CD4-positive, alpha-beta memory T cell (primary cell): ENCODE measurements at regions of chr6 and their contacts with region 1.

Region 1: GRCh38 chr6:129748212-129748900 is 38.4 kb upstream of the ARHGAP18 start:
- DNase-seq: peak; percentile 56 to 71 (median 60)
- H3K4me3 ChIP-seq: peak overlapping the region; percentile 12 to 68
- H3K4me3 Mint-ChIP-seq: peak overlapping the region; percentile 73 to 93 (median 86)
- H3K27ac ChIP-seq: peak overlapping the region; percentile 59
- H3K27ac Mint-ChIP-seq: peak overlapping the region; percentile 85 to 97 (median 96)
- H3K4me1 ChIP-seq: peaks cover 61% of the 10 kb centered on the region
- H3K4me1 Mint-ChIP-seq: peaks cover 42 to 61% (median 55%) of the 10 kb centered on the region in 4 donors
- H3K27me3 ChIP-seq: no peaks in the 10 kb centered on the region
- H3K27me3 Mint-ChIP-seq: no peaks in the 10 kb centered on the region

Region 2: DNA sequence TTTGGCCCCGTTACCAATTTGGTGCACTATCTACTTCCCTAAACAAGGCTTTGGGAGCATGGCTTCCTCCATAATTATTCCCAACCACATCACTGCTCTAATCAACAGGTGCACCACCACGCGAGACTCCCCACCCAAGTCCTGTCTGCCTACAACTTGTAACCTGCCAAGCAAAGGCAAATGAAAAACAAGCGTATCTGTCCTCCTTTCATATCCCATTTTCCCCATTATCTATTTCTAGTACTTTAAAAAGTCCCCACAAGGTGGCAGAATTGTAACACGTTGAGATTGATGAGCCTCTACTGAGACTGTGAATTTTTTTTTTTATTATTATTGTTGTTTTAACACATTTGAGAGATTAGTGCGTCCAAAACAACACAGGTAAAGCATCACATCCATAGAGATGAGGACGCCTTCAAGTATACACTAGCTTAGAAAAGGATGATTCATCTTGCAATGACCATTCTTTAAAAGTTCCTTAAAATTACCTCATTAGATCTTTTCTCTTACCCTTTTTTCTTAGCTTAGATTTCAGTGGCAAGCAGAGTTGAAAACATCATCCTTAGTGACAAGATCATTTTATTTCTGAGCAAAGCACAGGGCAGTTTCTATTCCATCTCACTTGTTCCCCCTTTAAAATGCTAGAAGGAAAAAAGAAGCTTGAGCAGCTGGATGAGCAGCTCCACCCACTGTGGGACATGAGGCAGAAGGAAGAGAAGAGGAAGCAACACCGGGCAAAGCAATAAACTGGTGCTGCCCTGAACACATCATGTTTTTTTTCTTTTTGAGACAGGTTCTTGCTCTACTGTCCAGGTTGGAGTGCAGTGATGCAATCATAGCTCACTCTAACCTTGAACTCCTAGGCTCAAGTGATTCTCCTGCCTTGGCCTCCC is 249.2 kb before region 1 on chr6:
- CTCF ChIA-PET with region 1: interaction called, 12 read pairs
- POLR2A ChIA-PET with region 1: no interaction called
- intact Hi-C with region 1: loop called (anchors 2 kb)
- DNase-seq: peak; percentile 29 to 62 (median 55)
- H3K4me3 ChIP-seq: no peak overlapping the region
- H3K4me3 Mint-ChIP-seq: peak overlapping the region; percentile 37 to 89 (median 76)
- H3K27ac ChIP-seq: no peak overlapping the region
- H3K27ac Mint-ChIP-seq: peak overlapping the region in 5 of 7 donors; percentile 1 to 50 (median 19)
- H3K4me1 ChIP-seq: peaks cover 21% of the 10 kb centered on the region
- H3K4me1 Mint-ChIP-seq: peaks cover 15 to 24% (median 19%) of the 10 kb centered on the region in 4 donors
- H3K27me3 ChIP-seq: no peaks in the 10 kb centered on the region
- H3K27me3 Mint-ChIP-seq: no peaks in the 10 kb centered on the region

Region 3: DNA sequence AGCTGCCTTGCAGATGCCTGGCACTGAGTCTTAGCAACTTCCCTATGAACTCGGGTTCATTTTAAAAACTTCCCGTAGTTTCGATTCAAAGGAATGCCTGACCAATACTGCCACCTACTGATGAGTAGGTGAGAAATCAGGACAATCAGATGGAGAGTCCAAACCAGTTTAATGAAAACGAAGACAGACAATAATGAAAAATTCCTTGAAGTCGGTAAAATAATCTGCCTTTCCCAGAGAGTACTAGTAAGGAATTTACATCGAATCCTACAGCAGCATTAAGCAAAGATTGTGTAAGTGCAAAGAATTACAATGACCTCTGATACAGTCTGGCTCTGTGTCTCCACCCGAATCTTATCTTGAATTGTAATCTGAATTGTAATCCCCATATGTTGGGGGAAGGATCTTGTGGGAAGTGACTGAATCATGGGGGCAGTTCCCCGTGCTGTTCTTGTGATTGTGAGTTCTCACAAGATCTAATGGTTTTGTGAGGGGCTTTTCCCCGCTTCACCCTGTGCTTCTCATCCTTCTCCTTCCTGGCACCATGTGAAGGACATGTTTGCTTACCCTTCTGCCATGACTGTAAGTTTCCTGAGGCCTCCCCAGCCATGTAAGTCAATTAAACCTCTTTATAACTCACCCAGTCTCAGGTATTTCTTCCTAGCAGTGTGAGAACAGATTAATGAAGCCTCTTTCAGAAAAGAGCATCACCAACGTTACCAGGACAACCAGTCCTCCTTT is 172.8 kb before region 1 on chr6:
- CTCF ChIA-PET with region 1: no interaction called
- POLR2A ChIA-PET with region 1: no interaction called
- intact Hi-C with region 1: no loop called
- DNase-seq: peak in 4 of 5 donors; percentile 14 to 30 (median 18)
- H3K4me3 ChIP-seq: no peak overlapping the region
- H3K4me3 Mint-ChIP-seq: peak overlapping the region; percentile 15 to 64 (median 50)
- H3K27ac ChIP-seq: no peak overlapping the region
- H3K27ac Mint-ChIP-seq: peak overlapping the region in 1 of 7 donors; percentile 57
- H3K4me1 ChIP-seq: no peaks in the 10 kb centered on the region
- H3K4me1 Mint-ChIP-seq: peaks cover 3 to 8% (median 7%) of the 10 kb centered on the region in 4 donors
- H3K27me3 ChIP-seq: no peaks in the 10 kb centered on the region
- H3K27me3 Mint-ChIP-seq: no peaks in the 10 kb centered on the region

Region 4: DNA sequence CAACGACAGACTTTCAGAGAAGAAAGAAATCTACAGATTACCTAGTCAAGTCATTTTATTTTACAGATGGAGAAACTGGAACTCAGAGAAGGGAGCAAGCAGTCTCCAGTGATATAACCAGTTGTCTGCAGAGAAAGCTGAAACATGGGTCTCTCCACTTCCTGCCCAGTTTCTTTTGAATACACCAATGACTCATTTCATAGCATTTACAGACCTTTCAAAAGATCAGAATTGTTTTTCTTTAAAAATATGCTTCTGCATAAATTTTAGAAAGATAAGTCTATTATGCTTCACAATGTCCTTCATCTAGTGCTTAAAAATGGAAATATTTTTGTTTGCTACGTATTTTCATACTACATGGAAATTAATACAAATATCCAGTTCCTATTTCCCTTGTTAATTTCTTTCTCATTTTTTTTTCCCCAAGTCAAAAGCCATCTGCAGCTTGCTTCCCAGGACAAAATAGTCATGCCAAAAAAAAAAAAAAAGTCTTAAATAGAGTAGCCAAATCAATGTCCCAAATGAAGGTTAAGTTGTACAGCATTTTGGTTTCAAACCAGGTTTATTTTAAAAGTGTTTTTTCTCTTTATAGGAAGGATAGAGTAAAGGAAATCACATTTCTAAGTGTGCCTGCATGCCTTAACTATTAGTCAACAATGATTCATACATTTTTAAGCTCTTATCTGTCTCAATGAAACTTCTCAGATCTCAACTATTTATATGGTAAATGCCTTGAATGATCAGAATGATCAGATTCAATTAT is 75.3 kb before region 1 on chr6:
- CTCF ChIA-PET with region 1: interaction called, 10 read pairs
- POLR2A ChIA-PET with region 1: interaction called, 8 read pairs
- intact Hi-C with region 1: loop called (anchors 1 kb)
- DNase-seq: peak; percentile 18 to 48 (median 19)
- H3K4me3 ChIP-seq: peak overlapping the region in 1 of 2 donors; percentile 53
- H3K4me3 Mint-ChIP-seq: peak overlapping the region; percentile 80 to 87 (median 82)
- H3K27ac ChIP-seq: peak overlapping the region; percentile 56
- H3K27ac Mint-ChIP-seq: peak overlapping the region; percentile 74 to 94 (median 92)
- H3K4me1 ChIP-seq: peaks cover 32% of the 10 kb centered on the region
- H3K4me1 Mint-ChIP-seq: peaks cover 29 to 31% (median 29%) of the 10 kb centered on the region in 4 donors
- H3K27me3 ChIP-seq: no peaks in the 10 kb centered on the region
- H3K27me3 Mint-ChIP-seq: no peaks in the 10 kb centered on the region

Region 5: GRCh38 chr6:129683601-129684322 is 64.6 kb before region 1 on chr6:
- CTCF ChIA-PET with region 1: interaction called, 5 read pairs
- POLR2A ChIA-PET with region 1: interaction called, 12 read pairs
- intact Hi-C with region 1: loop called (anchors 1 kb)
- DNase-seq: peak; percentile 55 to 86 (median 64)
- H3K4me3 ChIP-seq: no peak overlapping the region
- H3K4me3 Mint-ChIP-seq: peak overlapping the region in 7 of 8 donors; percentile 30 to 75 (median 52)
- H3K27ac ChIP-seq: peak overlapping the region; percentile 43
- H3K27ac Mint-ChIP-seq: peak overlapping the region; percentile 70 to 91 (median 90)
- H3K4me1 ChIP-seq: peaks cover 65% of the 10 kb centered on the region
- H3K4me1 Mint-ChIP-seq: peaks cover 37 to 51% (median 44%) of the 10 kb centered on the region in 4 donors
- H3K27me3 ChIP-seq: no peaks in the 10 kb centered on the region
- H3K27me3 Mint-ChIP-seq: no peaks in the 10 kb centered on the region

Region 6: GRCh38 chr6:129709769-129710449 is 38.4 kb before region 1 on chr6 and contains the start of gene ARHGAP18:
- CTCF ChIA-PET with region 1: interaction called, 4 read pairs
- POLR2A ChIA-PET with region 1: interaction called, 18 read pairs
- intact Hi-C with region 1: no loop called
- DNase-seq: peak; percentile 58 to 76 (median 68)
- H3K4me3 ChIP-seq: peak within 1 kb of the TSS; percentile 81 to 97
- H3K4me3 Mint-ChIP-seq: peak within 1 kb of the TSS; percentile 95 to 99 (median 98)
- H3K27ac ChIP-seq: peak within 1 kb of the TSS; percentile 65
- H3K27ac Mint-ChIP-seq: peak within 1 kb of the TSS; percentile 57 to 96 (median 94)
- H3K4me1 ChIP-seq: peaks cover 38% of the 10 kb centered on the region
- H3K4me1 Mint-ChIP-seq: peaks cover 29 to 45% (median 38%) of the 10 kb centered on the region in 4 donors
- H3K27me3 ChIP-seq: no peaks in the 10 kb centered on the region
- H3K27me3 Mint-ChIP-seq: peaks cover 0 to 2% of the 10 kb centered on the region in 2 donors
- total RNA-seq, gene ARHGAP18: 4.3 to 4.6 TPM

Region 7: DNA sequence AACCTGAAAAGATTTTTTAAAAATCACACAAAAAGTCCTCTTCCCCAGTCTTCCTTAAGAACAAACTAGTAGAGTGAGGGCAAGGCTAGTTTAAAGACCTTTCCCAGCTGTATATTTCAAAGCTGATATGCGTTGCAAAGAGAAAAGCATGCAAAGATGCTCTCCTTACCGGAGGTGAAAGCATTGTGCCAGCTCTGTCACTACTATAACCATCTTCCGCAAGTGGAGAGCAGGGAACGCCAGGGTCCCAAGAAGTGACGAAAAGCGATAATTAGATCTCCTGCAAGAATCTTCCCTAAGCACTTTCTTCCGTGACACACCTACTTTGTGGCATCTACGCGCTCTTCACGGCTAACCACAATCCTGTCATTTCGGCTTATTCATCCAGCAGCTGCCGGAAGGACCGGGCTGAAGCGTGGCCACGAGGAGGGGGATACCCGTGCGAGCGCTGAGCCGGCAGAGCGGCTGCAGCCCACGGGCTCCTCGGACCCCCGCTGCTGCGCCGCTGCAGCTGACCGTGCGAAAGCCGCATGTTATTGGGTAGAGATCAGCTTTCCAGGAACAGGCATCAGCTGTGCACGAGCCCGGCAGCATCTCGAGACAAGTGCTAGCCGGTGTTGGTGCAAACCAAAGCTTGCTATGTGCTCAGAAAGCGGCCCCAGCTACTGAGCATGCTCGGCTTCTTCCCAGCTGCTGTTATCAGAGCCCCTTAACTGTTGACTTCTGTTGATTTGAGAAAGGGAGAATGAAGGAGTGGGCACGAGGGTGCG is 18.8 kb after region 1 on chr6:
- CTCF ChIA-PET with region 1: interaction called, 6 read pairs
- POLR2A ChIA-PET with region 1: interaction called, 11 read pairs
- intact Hi-C with region 1: no loop called
- DNase-seq: peak; percentile 54 to 75 (median 57)
- H3K4me3 ChIP-seq: peak overlapping the region; percentile 46 to 50
- H3K4me3 Mint-ChIP-seq: peak overlapping the region; percentile 75 to 90 (median 85)
- H3K27ac ChIP-seq: no peak overlapping the region
- H3K27ac Mint-ChIP-seq: peak overlapping the region in 5 of 7 donors; percentile 10 to 62 (median 38)
- H3K4me1 ChIP-seq: peaks cover 15% of the 10 kb centered on the region
- H3K4me1 Mint-ChIP-seq: peaks cover 9 to 17% (median 12%) of the 10 kb centered on the region in 4 donors
- H3K27me3 ChIP-seq: peaks cover 4% of the 10 kb centered on the region
- H3K27me3 Mint-ChIP-seq: peaks cover 0 to 12% of the 10 kb centered on the region in 2 donors

Region 8: GRCh38 chr6:129774697-129775447 is 26.5 kb after region 1 on chr6:
- CTCF ChIA-PET with region 1: interaction called, 13 read pairs
- POLR2A ChIA-PET with region 1: no interaction called
- intact Hi-C with region 1: no loop called
- DNase-seq: peak; percentile 27 to 44 (median 32)
- H3K4me3 ChIP-seq: no peak overlapping the region
- H3K4me3 Mint-ChIP-seq: no peak overlapping the region
- H3K27ac ChIP-seq: no peak overlapping the region
- H3K27ac Mint-ChIP-seq: no peak overlapping the region
- H3K4me1 ChIP-seq: no peaks in the 10 kb centered on the region
- H3K4me1 Mint-ChIP-seq: no peaks in the 10 kb centered on the region
- H3K27me3 ChIP-seq: no peaks in the 10 kb centered on the region
- H3K27me3 Mint-ChIP-seq: no peaks in the 10 kb centered on the region